Left ventricle myocardium inferior (tissue), 1 donor: ENCODE measurements at regions of chr9 and their contacts with region 1.

Region 1: DNA sequence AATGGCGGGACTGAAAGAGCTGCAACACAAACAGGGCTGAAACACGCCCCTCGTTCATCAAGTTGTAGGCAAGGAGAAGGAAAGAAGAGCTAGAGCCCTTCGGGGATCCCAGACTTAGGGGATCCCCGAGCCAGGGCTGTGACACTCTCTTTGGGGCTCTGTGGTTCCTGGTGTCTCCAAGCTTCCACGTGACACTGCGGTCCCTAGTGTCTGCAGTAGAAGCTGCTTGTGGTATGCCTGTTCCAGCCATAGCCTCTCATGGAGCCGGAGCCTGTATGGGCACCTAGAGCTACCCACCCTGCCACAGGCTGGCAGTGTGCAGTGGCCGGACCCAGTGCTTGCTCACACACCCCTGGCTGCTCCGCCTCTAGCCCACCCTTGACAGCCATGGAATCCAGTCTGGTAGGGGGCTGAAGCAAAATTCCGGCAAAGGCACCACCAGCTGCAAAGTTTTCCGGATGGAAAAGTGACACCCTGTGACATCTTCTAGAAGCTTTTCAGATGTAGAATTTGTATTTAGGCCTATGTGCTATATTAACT is 1439.6 kb upstream of the ACO1 start:
- DNase-seq: no peak
- H3K4me3 ChIP-seq: no peak overlapping the region
- H3K27ac ChIP-seq: no peak overlapping the region
- H3K4me1 ChIP-seq: no peaks in the 10 kb centered on the region
- H3K27me3 ChIP-seq: no peaks in the 10 kb centered on the region
- CTCF ChIP-seq: no peak

Region 2: GRCh38 chr9:30913331-30913730 is 31.5 kb before region 1 on chr9:
- intact Hi-C with region 1: loop called (anchors 5 kb)
- DNase-seq: no peak
- H3K4me3 ChIP-seq: no peak overlapping the region
- H3K27ac ChIP-seq: no peak overlapping the region
- H3K4me1 ChIP-seq: no peaks in the 10 kb centered on the region
- H3K27me3 ChIP-seq: no peaks in the 10 kb centered on the region
- CTCF ChIP-seq: no peak

Region 3: GRCh38 chr9:31013371-31013770 is 68.6 kb after region 1 on chr9:
- intact Hi-C with region 1: loop called (anchors 10 kb)
- DNase-seq: no peak
- H3K4me3 ChIP-seq: no peak overlapping the region
- H3K27ac ChIP-seq: no peak overlapping the region
- H3K4me1 ChIP-seq: no peaks in the 10 kb centered on the region
- H3K27me3 ChIP-seq: no peaks in the 10 kb centered on the region
- CTCF ChIP-seq: no peak